ENCODE measurements at regions of chr5 and their contacts with region 1.

Region 1: GRCh38 chr5:179963375-179963774 is 55.7 kb upstream of the TBC1D9B start:
- DNase-seq: no peak

Region 2: DNA sequence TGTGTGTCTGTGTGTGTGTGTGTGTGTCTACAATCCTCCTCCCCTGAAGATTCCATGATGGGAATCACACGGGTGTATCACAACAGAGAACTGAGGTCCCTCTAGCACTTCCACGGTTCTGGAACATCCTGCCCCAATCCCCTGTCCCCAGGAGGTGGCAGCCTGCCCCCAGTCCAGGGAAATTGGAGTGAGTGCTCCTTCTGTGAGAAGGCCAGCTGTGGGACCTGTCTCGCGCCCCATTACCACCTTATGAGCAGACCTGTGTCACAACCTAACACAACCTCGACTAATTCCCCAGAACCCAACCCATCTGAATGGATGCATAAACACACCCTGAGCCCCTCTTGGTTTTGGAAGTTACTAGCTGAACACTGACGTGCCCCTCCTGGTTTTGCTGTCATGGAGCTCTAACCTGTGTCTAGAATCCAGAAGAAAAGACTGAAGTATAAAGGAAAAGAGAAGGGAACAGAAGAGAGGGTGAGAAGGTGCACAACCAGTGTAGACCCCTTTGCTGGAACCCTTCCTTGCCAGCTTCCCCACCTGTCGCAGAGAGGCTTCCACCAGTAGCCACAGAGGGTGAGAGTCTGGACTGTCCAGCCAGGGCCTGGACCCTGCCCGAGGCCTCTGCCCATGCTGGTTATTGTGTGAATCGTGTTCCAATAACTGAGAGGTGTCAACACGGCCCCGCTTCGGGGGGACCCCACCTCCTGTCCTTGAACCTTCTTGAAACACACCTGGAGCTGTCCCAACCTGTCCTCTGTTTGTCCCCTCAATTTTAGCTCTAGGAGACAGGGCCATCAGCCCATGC is 1080.1 kb after region 1 on chr5:
- intact Hi-C with region 1: loop called in 1 of 2 experiments (anchors 5 kb)
- DNase-seq: peak; percentile 58